Astrocyte of the cerebellum (primary cell): ENCODE measurements at regions of chr1 and their contacts with region 1.

Region 1: DNA sequence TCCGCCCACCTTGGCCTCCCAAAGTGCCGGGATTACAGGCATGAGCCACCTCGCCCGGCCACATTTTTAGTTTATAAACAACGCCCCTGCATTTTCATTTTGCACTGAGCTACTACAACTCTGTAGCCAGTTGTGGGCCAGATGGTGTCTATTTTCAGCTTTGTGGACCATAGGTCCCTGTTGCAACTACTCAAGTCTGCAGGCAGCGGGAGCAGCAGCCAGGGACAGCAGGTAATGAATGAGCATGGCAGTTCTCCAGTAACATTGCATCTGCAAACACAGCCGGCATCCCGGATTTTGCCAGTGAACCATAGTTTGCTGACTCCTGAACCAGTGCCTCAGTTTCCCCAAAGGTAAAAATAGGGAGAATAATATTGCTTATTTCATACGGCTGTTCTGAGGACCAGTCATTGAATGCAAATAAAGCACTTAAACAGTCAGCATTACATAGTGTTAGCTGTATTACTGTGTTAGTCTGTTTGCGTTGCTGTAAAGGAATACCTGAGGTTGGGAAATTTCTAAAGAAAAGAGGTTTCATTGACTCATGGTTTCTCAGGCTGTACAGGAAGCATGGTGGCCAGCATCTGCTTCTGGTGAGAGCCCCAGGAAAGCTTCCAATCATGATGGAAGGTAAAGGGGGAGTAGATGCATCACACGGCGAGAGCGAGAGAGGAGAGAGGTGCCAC is 65.5 kb upstream of the SLC45A1 start:
- DNase-seq: no peak
- H3K4me3 ChIP-seq: no peak overlapping the region
- CTCF ChIP-seq: no peak

Region 2: DNA sequence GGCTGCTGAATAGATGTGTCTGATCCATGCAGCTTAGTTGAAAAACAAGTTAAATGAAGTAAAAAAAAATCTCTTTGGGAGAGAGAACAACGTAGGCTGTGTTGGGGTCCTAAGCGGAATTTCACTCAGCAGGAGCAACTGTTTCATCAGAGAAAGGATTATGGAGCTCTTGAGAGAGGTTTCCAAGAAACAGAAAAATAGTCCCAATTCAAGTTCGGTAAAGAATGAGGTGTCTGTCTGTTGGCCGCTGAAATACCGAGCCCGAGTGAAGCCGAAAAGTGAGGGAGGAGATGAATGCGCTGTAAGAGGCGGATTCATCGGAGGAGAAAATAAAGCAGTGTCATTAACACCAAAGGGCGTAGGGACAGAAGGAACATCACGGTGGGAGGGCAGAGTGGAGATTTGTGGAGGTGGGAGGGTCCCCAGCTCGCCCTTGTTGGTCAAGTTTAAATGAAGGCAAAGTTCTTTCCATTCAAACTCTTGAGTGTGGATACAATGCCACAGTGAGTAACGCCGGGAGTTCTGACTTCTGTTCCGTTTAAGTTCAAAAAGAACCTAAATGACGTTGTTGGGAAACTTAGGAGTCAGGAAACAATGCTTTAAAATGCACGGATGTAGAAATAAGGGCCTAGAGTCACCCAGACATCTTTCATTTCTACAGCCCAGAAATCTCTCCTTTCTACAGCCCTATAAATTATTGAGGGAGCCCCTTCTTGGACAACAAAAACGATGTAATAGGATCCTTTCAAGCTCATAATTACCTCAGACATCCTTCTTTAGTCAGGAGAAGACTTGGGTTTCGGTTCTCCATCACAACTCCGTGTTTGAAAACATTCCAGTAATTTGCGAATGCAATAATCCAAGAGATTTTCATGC is 49.9 kb after region 1 on chr1:
- in situ Hi-C with region 1: loop called (anchors 5 kb)
- DNase-seq: no peak
- H3K4me3 ChIP-seq: no peak overlapping the region
- CTCF ChIP-seq: no peak

Region 3: GRCh38 chr1:9555942-9556341 is 1303.5 kb after region 1 on chr1:
- in situ Hi-C with region 1: no loop called
- DNase-seq: no peak
- H3K4me3 ChIP-seq: no peak overlapping the region
- CTCF ChIP-seq: no peak